H1 (cell line): ENCODE measurements at regions of chr20 and their contacts with region 1.

Region 1: GRCh38 chr20:50165684-50166554 is 12.4 kb upstream of the PEDS1 start:
- DNase-seq: peak; percentile 71 to 91
- H3K4me3 ChIP-seq: peak overlapping the region in 3 of 4 experiments; percentile 27 to 51 (median 48); a peak in 7 of 8 replicates
- H3K27ac ChIP-seq: peak overlapping the region; percentile 84
- H3K4me1 ChIP-seq: peaks cover 4 to 8% (median 5%) of the 10 kb centered on the region in 4 experiments; a peak in 5 of 7 replicates
- H3K27me3 ChIP-seq: no peaks in the 10 kb centered on the region
- CTCF ChIP-seq: no peak
- EP300 ChIP-seq: peak in 1 of 2 experiments; percentile 83; a peak in 1 of 3 replicates
- POLR2A ChIP-seq: peak in 1 of 2 experiments; percentile 87; a peak in 2 of 3 replicates
- RAD21 ChIP-seq: no peak

Region 2: GRCh38 chr20:50115591-50116372 is 50.1 kb before region 1 on chr20:
- CTCF ChIA-PET with region 1: interaction called, 208 read pairs
- POLR2A ChIA-PET with region 1: interaction called, 15 read pairs
- DNase-seq: peak; percentile 81 to 89
- H3K4me3 ChIP-seq: peak overlapping the region; percentile 69 to 84 (median 78)
- H3K27ac ChIP-seq: no peak overlapping the region
- H3K4me1 ChIP-seq: peaks cover 2 to 16% (median 7%) of the 10 kb centered on the region in 4 experiments; a peak in 6 of 7 replicates
- H3K27me3 ChIP-seq: no peaks in the 10 kb centered on the region
- CTCF ChIP-seq: no peak
- EP300 ChIP-seq: no peak
- POLR2A ChIP-seq: peak in 1 of 2 experiments; percentile 65; a peak in 2 of 3 replicates
- RAD21 ChIP-seq: no peak

Region 3: GRCh38 chr20:50120897-50121693 is 44.8 kb before region 1 on chr20:
- CTCF ChIA-PET with region 1: interaction called, 208 read pairs
- POLR2A ChIA-PET with region 1: interaction called, 15 read pairs
- DNase-seq: peak; percentile 56 to 66
- H3K4me3 ChIP-seq: no peak overlapping the region
- H3K27ac ChIP-seq: no peak overlapping the region
- H3K4me1 ChIP-seq: peaks cover 0 to 5% (median 1%) of the 10 kb centered on the region in 4 experiments; a peak in 3 of 7 replicates
- H3K27me3 ChIP-seq: no peaks in the 10 kb centered on the region
- CTCF ChIP-seq: peak; percentile 96 to 100 (median 97)
- EP300 ChIP-seq: no peak
- POLR2A ChIP-seq: no peak
- RAD21 ChIP-seq: peak; percentile 95 to 98

Region 4: DNA sequence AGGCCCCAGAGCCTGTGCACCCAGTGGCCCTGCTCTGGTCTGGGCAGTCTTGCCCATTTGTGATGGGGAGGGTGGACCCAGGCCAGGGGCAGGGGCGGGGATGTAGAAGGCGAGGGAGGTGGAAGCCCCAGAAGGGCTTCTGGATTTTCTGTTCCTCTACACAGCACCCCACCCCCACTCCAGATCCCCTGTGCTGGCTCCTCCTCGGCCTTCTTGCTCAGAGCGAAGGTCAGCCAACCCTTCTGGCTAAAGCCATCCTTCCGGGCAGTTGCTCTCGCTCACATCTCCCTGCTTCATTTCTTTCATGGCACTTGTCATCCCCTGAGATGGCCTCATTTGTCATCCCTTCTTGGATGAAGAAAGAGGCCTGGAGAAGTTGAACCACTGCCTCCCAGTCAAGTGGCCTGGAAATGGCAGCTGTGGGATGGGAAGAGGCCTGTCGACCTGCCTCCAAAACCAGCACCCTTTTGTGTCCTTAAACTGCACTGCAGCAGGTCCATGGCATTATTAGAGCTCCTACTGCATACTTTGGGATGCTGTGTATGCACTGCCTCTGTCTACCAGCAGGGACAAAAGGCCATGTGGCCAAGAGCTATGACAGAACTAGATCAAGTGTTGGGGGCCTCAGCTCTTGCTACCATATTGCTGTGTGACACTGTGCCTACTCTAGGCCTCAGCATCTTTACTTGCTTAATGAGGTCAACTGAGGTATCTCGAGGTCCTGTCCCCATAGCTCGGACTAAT is 32.3 kb before region 1 on chr20:
- CTCF ChIA-PET with region 1: interaction called, 20 read pairs
- POLR2A ChIA-PET with region 1: no interaction called
- DNase-seq: no peak
- H3K4me3 ChIP-seq: no peak overlapping the region
- H3K27ac ChIP-seq: no peak overlapping the region
- H3K4me1 ChIP-seq: peaks cover 0 to 2% (median 0%) of the 10 kb centered on the region in 4 experiments; a peak in 1 of 7 replicates
- H3K27me3 ChIP-seq: no peaks in the 10 kb centered on the region
- CTCF ChIP-seq: peak in 1 of 3 experiments; percentile 27; a peak in 1 of 4 replicates
- EP300 ChIP-seq: no peak
- POLR2A ChIP-seq: no peak
- RAD21 ChIP-seq: no peak

Region 5: GRCh38 chr20:50138479-50139393 is 27.2 kb before region 1 on chr20:
- CTCF ChIA-PET with region 1: interaction called, 20 read pairs
- POLR2A ChIA-PET with region 1: interaction called, 3 read pairs
- DNase-seq: no peak
- H3K4me3 ChIP-seq: no peak overlapping the region
- H3K27ac ChIP-seq: peak overlapping the region; percentile 38; the same call in 1 of the 2 replicates
- H3K4me1 ChIP-seq: peaks cover 5 to 17% (median 8%) of the 10 kb centered on the region in 4 experiments
- H3K27me3 ChIP-seq: no peaks in the 10 kb centered on the region
- CTCF ChIP-seq: peak; percentile 24 to 45 (median 41); a peak in 3 of 4 replicates
- EP300 ChIP-seq: no peak
- POLR2A ChIP-seq: no peak
- RAD21 ChIP-seq: no peak; a peak in 1 of 4 replicates

Region 6: GRCh38 chr20:50146732-50147662 is 18.9 kb before region 1 on chr20:
- CTCF ChIA-PET with region 1: interaction called, 87 read pairs
- POLR2A ChIA-PET with region 1: interaction called, 21 read pairs
- DNase-seq: no peak
- H3K4me3 ChIP-seq: no peak overlapping the region
- H3K27ac ChIP-seq: peak overlapping the region; percentile 56
- H3K4me1 ChIP-seq: peaks cover 14 to 26% (median 19%) of the 10 kb centered on the region in 4 experiments
- H3K27me3 ChIP-seq: no peaks in the 10 kb centered on the region
- CTCF ChIP-seq: no peak
- EP300 ChIP-seq: no peak
- POLR2A ChIP-seq: no peak
- RAD21 ChIP-seq: no peak

Region 7: DNA sequence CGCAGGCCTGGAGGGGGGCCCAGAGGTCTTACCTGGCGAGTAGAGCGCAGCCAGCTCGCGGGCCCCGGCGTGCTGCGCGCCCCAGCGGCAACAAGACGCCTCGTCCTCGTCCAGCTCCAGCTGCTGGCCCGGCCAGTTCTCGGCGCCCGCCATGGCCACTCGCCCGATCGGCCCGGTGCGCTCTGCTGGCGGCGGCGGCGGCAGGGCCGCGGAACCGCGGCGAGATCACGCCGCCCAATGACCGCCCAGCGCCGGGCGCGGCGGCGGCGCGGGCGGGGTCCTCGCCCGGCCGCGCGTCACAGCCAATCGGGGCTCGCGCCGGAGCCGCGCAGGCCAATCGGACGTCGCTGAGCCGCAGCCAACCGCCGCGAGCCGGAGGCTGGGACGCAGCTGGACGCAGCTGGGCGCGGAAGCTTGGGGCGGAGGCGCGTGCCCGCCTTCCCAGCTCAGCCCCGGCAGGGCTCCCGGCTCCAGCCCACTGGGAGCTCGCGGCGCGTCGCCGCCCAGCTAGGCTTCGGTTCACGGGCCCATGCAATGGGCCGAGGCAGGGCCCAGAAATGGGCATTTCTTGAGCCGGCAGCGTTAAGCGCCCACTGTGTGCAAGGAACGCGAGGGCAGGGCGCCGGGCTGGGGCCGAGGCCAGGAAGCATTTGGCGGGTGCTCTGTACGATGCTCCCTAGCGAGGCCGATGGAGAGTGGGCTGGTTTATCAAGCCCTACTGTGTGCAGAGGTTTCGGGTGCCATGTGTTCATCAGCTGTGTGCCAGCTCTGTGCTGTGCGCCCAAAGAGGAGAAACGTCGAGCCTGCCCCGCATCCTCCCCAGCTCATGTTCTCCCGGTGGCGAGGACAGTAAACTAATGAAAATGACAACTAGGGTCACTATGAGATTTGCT is 12.2 kb before region 1 on chr20 and contains the start of gene PEDS1:
- CTCF ChIA-PET with region 1: interaction called, 87 read pairs
- POLR2A ChIA-PET with region 1: interaction called, 21 read pairs
- DNase-seq: peak in 1 of 2 experiments; percentile 87
- H3K4me3 ChIP-seq: peak within 1 kb of the TSS; percentile 61 to 98 (median 86)
- H3K27ac ChIP-seq: peak within 1 kb of the TSS; percentile 26; the same call in 1 of the 2 replicates
- H3K4me1 ChIP-seq: peaks cover 9 to 27% (median 16%) of the 10 kb centered on the region in 4 experiments
- H3K27me3 ChIP-seq: peaks cover 0 to 3% (median under 1%) of the 10 kb centered on the region in 4 experiments; a peak in 2 of 7 replicates
- CTCF ChIP-seq: no peak
- EP300 ChIP-seq: no peak
- POLR2A ChIP-seq: peak; percentile 70 to 75
- RAD21 ChIP-seq: no peak
- total RNA-seq, gene PEDS1: 28.9 and 33.3 TPM in 2 replicates